ENCODE measurements at regions of chr12 and their contacts with region 1.

Region 1: GRCh38 chr12:110449799-110450497 is at the start of gene ARPC3:
- DNase-seq: peak; percentile 98
- ATAC-seq: peak; percentile 98
- H3K4me3 Mint-ChIP-seq: peak within 1 kb of the TSS; percentile 95
- H3K27ac Mint-ChIP-seq: peak within 1 kb of the TSS; percentile 100
- H3K4me1 Mint-ChIP-seq: peaks cover 47% of the 10 kb centered on the region
- H3K27me3 Mint-ChIP-seq: no peaks in the 10 kb centered on the region
- total RNA-seq, gene ARPC3: 369 to 418 TPM

Region 2: GRCh38 chr12:110217996-110218674 is 231.8 kb before region 1 on chr12:
- CTCF ChIA-PET with region 1: no interaction called
- DNase-seq: no peak
- ATAC-seq: no peak
- H3K4me3 Mint-ChIP-seq: no peak overlapping the region
- H3K27ac Mint-ChIP-seq: no peak overlapping the region
- H3K4me1 Mint-ChIP-seq: no peaks in the 10 kb centered on the region
- H3K27me3 Mint-ChIP-seq: peaks cover 3% of the 10 kb centered on the region

Region 3: DNA sequence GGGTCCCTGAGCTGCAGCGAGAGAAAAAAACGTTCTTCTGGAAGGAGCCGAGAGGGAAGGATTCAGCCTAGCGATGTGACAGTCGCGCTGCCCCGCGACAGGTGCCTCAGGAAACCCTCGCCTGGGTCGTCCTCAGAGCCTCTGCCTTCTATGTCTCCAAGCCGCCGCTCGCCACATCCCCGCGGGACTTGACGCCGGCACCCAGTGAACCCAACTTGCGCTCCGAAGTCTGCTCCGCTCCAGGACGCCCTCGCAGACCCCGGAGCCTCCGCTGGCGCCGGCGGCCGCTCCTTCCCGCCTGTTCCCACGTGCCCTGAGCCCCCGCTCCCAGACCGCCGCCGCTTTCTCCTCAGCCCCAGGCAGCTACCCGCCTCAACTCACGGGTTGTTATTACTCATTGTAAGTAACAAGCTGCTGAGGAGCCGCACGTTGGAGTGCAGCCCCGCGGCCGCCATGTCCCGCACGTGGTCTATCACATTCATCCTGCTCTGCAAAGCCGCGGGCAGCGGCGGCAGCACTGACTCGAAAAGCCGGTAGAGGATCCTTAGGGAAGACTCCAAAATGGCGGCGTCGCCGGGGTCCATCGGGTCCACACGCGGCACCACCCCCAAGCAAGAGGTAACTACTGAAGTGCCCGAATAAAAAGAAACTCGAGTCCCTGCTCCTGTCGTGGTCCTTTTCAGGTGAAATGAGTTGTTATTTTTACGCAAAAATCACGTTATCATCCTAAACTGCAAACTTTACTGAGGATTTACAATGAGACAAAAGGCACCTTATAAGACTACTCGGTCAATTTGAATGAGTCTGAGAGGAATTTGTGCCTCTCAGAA is 46.6 kb before region 1 on chr12 and contains the start of gene ANAPC7:
- CTCF ChIA-PET with region 1: no interaction called
- DNase-seq: peak; percentile 90
- ATAC-seq: peak; percentile 93
- H3K4me3 Mint-ChIP-seq: peak within 1 kb of the TSS; percentile 100
- H3K27ac Mint-ChIP-seq: peak within 1 kb of the TSS; percentile 99
- H3K4me1 Mint-ChIP-seq: peaks cover 26% of the 10 kb centered on the region
- H3K27me3 Mint-ChIP-seq: no peaks in the 10 kb centered on the region
- total RNA-seq, gene ANAPC7: 55.3 to 74.9 TPM

Region 4: GRCh38 chr12:110468212-110469048 is 18.5 kb after region 1 on chr12 and contains the starts of genes FAM216A and GPN3:
- CTCF ChIA-PET with region 1: interaction called, 98 read pairs
- DNase-seq: peak; percentile 98
- ATAC-seq: peak; percentile 88
- H3K4me3 Mint-ChIP-seq: peak within 1 kb of the TSS; percentile 92
- H3K27ac Mint-ChIP-seq: peak within 1 kb of the TSS; percentile 98
- H3K4me1 Mint-ChIP-seq: peaks cover 43% of the 10 kb centered on the region
- H3K27me3 Mint-ChIP-seq: no peaks in the 10 kb centered on the region
- total RNA-seq, gene FAM216A: 23.1 to 24.8 TPM
- total RNA-seq, gene GPN3: 25.8 to 34.6 TPM

Region 5: GRCh38 chr12:110501752-110502738 is 52.1 kb after region 1 on chr12 and contains the starts of genes RAD9B and VPS29:
- CTCF ChIA-PET with region 1: interaction called, 30 read pairs
- DNase-seq: peak; percentile 100
- ATAC-seq: peak; percentile 95
- H3K4me3 Mint-ChIP-seq: peak within 1 kb of the TSS; percentile 99
- H3K27ac Mint-ChIP-seq: peak within 1 kb of the TSS; percentile 98
- H3K4me1 Mint-ChIP-seq: peaks cover 35% of the 10 kb centered on the region
- H3K27me3 Mint-ChIP-seq: no peaks in the 10 kb centered on the region
- total RNA-seq, gene RAD9B: 1.8 to 2.2 TPM
- total RNA-seq, gene VPS29: 126 to 132 TPM

Region 6: DNA sequence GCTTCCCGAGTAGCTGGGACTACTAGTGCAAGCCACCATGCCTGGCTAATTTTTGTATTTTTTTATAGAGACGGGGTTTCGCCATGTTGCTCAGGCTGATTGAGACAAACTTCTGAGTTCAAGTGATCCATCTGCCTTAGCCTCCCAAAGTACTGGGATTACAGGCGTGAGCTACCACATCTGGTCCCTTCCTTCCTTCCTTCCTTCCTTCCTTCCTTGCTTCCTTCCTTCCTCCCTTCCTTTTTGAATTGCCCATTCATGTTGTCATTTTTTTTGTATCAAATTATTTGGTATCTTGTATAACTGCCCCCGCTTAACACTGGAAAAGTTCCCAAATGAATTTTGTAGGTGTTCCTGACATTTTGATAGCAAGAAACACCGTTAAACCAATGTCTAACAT is 63.9 kb after region 1 on chr12:
- CTCF ChIA-PET with region 1: interaction called, 14 read pairs
- DNase-seq: no peak
- ATAC-seq: no peak
- H3K4me3 Mint-ChIP-seq: no peak overlapping the region
- H3K27ac Mint-ChIP-seq: no peak overlapping the region
- H3K4me1 Mint-ChIP-seq: no peaks in the 10 kb centered on the region
- H3K27me3 Mint-ChIP-seq: no peaks in the 10 kb centered on the region

Region 7: DNA sequence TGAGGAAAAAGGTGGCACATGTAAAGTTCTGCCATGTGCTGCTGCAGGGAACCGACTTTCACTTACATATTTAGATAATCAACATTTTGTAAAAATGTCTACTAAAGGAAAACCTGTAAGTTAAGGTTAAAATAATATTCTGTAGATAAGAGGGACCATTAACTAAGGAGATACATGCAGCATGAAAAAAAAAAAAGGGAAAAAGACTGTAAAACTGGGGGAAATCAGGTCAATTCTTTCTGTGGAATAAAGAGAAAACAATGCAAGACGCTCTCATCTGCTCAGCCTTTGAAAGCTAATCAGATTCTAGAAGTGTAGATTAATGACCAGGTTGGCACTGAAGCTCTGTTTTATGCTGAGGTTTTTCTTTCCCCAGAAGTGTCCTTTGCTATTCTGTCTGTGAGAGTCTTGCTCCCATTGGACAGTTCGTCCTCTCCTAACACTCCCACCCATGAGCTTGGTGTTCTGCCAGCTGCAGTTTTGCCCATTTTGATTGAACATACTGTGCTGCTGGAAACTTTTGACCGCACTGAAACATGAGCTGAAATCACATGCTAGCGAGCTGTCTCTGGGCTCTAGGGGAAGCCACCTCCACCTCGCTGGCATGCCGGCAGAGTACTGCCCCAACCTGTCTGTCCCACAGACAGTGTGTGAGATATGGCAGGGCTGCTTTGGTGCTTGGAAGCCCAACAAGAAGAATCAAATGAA is 93.5 kb after region 1 on chr12:
- CTCF ChIA-PET with region 1: interaction called, 10 read pairs
- DNase-seq: no peak
- ATAC-seq: no peak
- H3K4me3 Mint-ChIP-seq: no peak overlapping the region
- H3K27ac Mint-ChIP-seq: peak overlapping the region; percentile 41
- H3K4me1 Mint-ChIP-seq: peaks cover 35% of the 10 kb centered on the region
- H3K27me3 Mint-ChIP-seq: no peaks in the 10 kb centered on the region

Region 8: DNA sequence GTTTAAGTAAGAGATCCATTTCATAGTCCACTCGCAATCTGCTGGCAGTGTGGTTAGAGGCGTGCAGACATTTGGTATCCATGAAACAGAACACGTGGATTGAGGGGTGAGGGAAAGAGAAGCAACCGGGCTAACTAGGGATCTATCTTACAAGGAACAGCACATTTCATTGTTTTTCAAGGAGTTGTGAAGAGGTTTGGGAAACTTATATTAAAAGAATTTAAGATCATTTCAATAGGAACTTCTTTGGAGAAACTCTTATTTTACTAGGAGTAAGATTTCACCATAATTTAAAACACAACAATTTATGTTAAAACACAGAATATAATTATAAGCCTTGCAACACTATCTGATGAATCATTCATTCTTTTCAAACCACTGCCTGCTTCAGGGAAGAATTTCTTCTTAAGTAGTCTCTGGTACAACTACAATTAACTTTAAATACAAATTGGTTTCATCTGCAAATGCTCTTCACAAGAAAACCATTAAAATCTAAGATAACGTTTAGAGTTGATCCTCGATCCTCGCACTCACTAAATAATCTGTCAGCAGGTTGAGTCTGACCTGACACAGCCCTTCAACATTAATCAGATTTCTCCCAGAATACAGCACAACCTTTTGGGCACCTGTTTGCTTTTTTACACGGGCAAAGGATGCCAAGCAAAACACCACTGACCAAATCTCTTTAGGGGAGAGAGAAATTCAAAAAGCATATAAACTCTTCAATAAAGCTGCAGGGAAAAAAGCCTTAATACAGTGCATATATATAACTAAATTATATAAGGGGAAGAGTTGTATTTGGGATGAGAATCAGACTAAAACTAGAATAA is 105.8 kb after region 1 on chr12:
- CTCF ChIA-PET with region 1: interaction called, 10 read pairs
- DNase-seq: no peak
- ATAC-seq: no peak
- H3K4me3 Mint-ChIP-seq: no peak overlapping the region
- H3K27ac Mint-ChIP-seq: no peak overlapping the region
- H3K4me1 Mint-ChIP-seq: peaks cover 15% of the 10 kb centered on the region
- H3K27me3 Mint-ChIP-seq: no peaks in the 10 kb centered on the region

Region 9: DNA sequence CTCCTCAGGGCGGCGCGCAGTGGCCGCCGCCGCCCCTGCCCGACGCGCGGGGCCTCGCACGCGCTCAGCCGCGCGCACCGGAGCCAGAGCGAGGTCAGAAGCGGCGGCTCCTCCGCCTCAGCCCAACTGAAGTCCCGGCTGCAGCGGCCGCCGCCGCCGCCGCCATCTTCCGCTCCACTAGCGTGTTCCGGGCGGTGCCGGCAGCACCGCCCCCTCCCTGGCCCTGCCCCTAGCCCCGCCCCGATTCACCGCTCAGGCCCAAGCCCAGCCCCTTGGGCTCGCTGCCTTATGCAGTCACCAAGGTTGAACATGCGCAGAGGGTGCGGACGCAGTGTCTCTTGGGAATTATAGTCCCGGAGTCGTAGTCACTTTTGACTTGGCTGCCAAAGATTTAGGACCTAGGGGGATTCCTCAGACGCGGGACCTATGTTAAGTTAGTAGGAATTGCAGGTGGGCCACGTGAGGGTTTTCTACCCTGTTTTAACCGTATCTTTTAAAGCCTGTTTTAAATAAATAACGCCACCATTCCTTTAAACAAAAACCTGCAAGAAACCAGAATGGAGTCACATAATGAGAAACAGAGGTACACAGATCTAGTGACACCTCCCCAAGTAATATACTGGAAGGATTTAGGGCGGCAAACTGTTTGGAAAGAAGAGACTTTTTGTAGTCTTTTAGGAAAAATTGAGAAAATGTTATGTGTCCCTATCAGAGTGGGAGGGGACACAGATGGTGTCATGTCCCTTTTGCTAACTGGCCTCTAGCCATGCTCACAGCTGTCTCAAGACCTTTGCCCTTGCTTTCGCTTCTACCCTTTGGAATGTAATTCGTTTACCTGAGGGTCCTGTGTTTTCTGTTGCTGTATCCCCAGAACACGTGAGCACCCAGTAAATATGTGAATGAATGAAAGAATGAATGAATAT is 133.4 kb after region 1 on chr12 and contains the start of gene PPTC7:
- CTCF ChIA-PET with region 1: interaction called, 11 read pairs
- DNase-seq: peak; percentile 98
- ATAC-seq: peak; percentile 95
- H3K4me3 Mint-ChIP-seq: peak within 1 kb of the TSS; percentile 92
- H3K27ac Mint-ChIP-seq: peak within 1 kb of the TSS; percentile 89
- H3K4me1 Mint-ChIP-seq: peaks cover 59% of the 10 kb centered on the region
- H3K27me3 Mint-ChIP-seq: no peaks in the 10 kb centered on the region
- total RNA-seq, gene PPTC7: 23.2 to 32.9 TPM

Measured in activated CD8-positive, alpha-beta memory T cell treated with anti-CD3 and anti-CD28 coated beads, Interleukin-2, amount 10 ng/mL, durations not matched to agents 7 days and 5 days (primary cell).